Naive thymus-derived CD4-positive, alpha-beta T cell (primary cell): ENCODE measurements at regions of chr3 and their contacts with region 1.

Region 1: DNA sequence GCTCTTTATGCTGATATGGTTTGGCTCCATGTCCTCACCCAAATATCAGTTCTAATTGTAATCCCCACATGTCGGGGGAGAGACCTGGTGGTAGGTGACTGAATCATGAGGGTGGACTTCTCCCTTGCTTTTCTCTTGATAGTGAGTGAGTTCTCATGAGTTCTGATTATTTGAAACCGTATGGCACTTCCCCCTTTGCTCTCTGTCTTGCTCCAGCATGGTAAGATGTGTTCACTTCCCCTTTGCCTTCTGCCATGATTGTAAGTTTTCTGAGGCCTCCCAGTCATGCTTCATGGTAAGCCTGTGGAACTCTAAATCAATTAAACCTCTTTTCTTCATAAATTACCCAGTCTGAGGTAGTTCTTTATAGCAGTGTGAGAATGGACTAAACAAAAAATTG is 107.6 kb downstream of the IMPG2 start:
- DNase-seq: no peak
- ATAC-seq: no peak
- H3K4me3 ChIP-seq: no peak overlapping the region
- H3K4me3 Mint-ChIP-seq: no peak overlapping the region
- H3K27ac ChIP-seq: no peak overlapping the region
- H3K27ac Mint-ChIP-seq: no peak overlapping the region
- H3K4me1 ChIP-seq: no peaks in the 10 kb centered on the region
- H3K4me1 Mint-ChIP-seq: no peaks in the 10 kb centered on the region
- H3K27me3 ChIP-seq: no peaks in the 10 kb centered on the region
- H3K27me3 Mint-ChIP-seq: peaks cover 0 to 11% (median 8%) of the 10 kb centered on the region in 5 donors

Region 2: GRCh38 chr3:100893590-100893989 is 319.1 kb before region 1 on chr3:
- CTCF ChIA-PET with region 1: no interaction called
- POLR2A ChIA-PET with region 1: no interaction called
- intact Hi-C with region 1: no loop called
- DNase-seq: no peak
- ATAC-seq: no peak
- H3K4me3 ChIP-seq: no peak overlapping the region
- H3K4me3 Mint-ChIP-seq: no peak overlapping the region
- H3K27ac ChIP-seq: no peak overlapping the region
- H3K27ac Mint-ChIP-seq: no peak overlapping the region
- H3K4me1 ChIP-seq: no peaks in the 10 kb centered on the region
- H3K4me1 Mint-ChIP-seq: peaks cover 0 to 2% (median 0%) of the 10 kb centered on the region in 7 donors
- H3K27me3 ChIP-seq: no peaks in the 10 kb centered on the region
- H3K27me3 Mint-ChIP-seq: peaks cover 12 to 28% (median 16%) of the 10 kb centered on the region in 5 donors

Region 3: DNA sequence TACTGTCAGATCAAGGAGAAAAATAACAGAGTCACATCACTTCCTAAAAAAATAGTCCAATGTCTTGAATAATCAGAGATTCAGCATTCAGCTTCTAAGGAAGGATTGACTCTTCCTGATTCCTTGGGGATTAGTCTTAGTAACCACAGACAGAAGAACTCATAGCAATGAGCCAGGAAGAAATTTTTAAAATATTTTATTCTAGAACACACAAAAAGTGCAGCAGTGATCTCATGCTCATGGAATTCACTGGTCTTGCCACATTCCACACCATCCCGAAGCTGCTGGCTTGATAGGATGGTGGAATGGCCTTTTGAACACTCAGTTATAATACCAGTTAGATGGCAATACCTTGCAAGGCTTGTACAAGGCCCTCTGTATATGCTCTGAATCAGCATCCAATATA is 176.5 kb before region 1 on chr3:
- CTCF ChIA-PET with region 1: no interaction called
- POLR2A ChIA-PET with region 1: no interaction called
- intact Hi-C with region 1: no loop called
- DNase-seq: no peak
- ATAC-seq: no peak
- H3K4me3 ChIP-seq: no peak overlapping the region
- H3K4me3 Mint-ChIP-seq: no peak overlapping the region
- H3K27ac ChIP-seq: no peak overlapping the region
- H3K27ac Mint-ChIP-seq: no peak overlapping the region
- H3K4me1 ChIP-seq: no peaks in the 10 kb centered on the region
- H3K4me1 Mint-ChIP-seq: no peaks in the 10 kb centered on the region
- H3K27me3 ChIP-seq: no peaks in the 10 kb centered on the region
- H3K27me3 Mint-ChIP-seq: peaks cover 0 to 23% (median 8%) of the 10 kb centered on the region in 5 donors

Region 4: GRCh38 chr3:101229681-101230080 is 17.0 kb after region 1 on chr3:
- CTCF ChIA-PET with region 1: no interaction called
- POLR2A ChIA-PET with region 1: no interaction called
- intact Hi-C with region 1: no loop called
- DNase-seq: no peak
- ATAC-seq: no peak
- H3K4me3 ChIP-seq: no peak overlapping the region
- H3K4me3 Mint-ChIP-seq: no peak overlapping the region
- H3K27ac ChIP-seq: no peak overlapping the region
- H3K27ac Mint-ChIP-seq: no peak overlapping the region
- H3K4me1 ChIP-seq: no peaks in the 10 kb centered on the region
- H3K4me1 Mint-ChIP-seq: no peaks in the 10 kb centered on the region
- H3K27me3 ChIP-seq: no peaks in the 10 kb centered on the region
- H3K27me3 Mint-ChIP-seq: no peaks in the 10 kb centered on the region

Region 5: DNA sequence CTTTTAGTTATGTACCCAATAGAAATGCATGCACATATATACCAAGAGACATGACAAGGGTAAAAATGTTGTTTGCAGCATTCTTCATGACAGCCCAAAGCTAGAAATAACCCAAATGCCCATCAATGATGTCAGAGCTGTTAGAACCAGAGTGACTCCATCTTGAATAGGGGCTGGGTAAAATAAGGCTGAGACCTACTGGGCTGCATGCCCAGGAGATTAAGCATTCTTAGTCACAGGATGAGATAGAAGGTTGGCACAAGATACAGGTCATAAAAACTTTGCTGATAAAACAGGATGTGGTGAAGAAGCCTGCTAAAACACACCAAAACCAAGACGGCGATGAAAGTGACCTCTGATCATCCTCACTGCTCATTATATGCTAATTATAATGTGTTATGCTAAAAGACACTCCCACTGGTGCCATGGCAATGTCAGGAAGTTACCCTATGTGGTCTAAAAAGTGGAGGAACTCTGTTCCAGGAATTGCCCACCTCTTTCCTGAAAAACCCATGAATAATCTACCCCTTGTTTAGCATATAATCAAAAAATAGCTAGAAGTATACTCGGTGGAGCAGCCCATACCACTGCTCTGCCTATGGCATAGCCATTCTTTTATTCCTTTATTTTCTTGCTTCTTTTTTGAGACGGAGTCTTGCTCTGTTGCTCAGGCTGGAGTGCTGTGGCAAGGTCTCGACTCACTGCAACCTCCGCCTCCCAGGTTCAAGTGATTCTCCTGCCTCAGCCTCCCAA is 431.3 kb after region 1 on chr3:
- CTCF ChIA-PET with region 1: no interaction called
- POLR2A ChIA-PET with region 1: no interaction called
- intact Hi-C with region 1: loop called in 1 of 2 experiments (anchors 5 kb)
- DNase-seq: peak in 7 of 9 donors; percentile 22 to 64 (median 50)
- ATAC-seq: peak; percentile 80
- H3K4me3 ChIP-seq: no peak overlapping the region
- H3K4me3 Mint-ChIP-seq: peak overlapping the region in 8 of 10 donors; percentile 7 to 43 (median 20)
- H3K27ac ChIP-seq: no peak overlapping the region
- H3K27ac Mint-ChIP-seq: peak overlapping the region; percentile 69 to 88 (median 77)
- H3K4me1 ChIP-seq: peaks cover 17 to 21% of the 10 kb centered on the region in 2 donors
- H3K4me1 Mint-ChIP-seq: peaks cover 15 to 33% (median 30%) of the 10 kb centered on the region in 7 donors
- H3K27me3 ChIP-seq: no peaks in the 10 kb centered on the region
- H3K27me3 Mint-ChIP-seq: no peaks in the 10 kb centered on the region